ENCODE measurements at regions of chr4 and their contacts with region 1.

Region 1: GRCh38 chr4:15479089-15479912 is 9.6 kb downstream of the CC2D2A start:
- DNase-seq: peak; percentile 15 to 75 (median 37)
- ATAC-seq: peak; percentile 85
- H3K4me3 ChIP-seq: peak overlapping the region; percentile 28
- H3K27ac ChIP-seq: no peak overlapping the region; the same call in 2 of the 3 replicates
- H3K4me1 ChIP-seq: peaks cover 0 to 9% of the 10 kb centered on the region in 2 experiments; a peak in 3 of 5 replicates
- H3K27me3 ChIP-seq: no peaks in the 10 kb centered on the region
- CTCF ChIP-seq: peak; percentile 49 to 87 (median 74); a peak in 5 of 6 replicates
- EP300 ChIP-seq: no peak
- POLR2A ChIP-seq: no peak
- RAD21 ChIP-seq: peak; percentile 89 to 91

Region 2: GRCh38 chr4:15513545-15513944 is 34.2 kb after region 1 on chr4:
- CTCF ChIA-PET with region 1: no interaction called
- POLR2A ChIA-PET with region 1: no interaction called
- in situ Hi-C with region 1: no loop called
- intact Hi-C with region 1: loop called (anchors 2 kb)
- DNase-seq: no peak
- ATAC-seq: peak; percentile 73
- H3K4me3 ChIP-seq: no peak overlapping the region
- H3K27ac ChIP-seq: no peak overlapping the region
- H3K4me1 ChIP-seq: no peaks in the 10 kb centered on the region
- H3K27me3 ChIP-seq: no peaks in the 10 kb centered on the region
- CTCF ChIP-seq: 0 out of 6 replicates have a peak, but pooled peaks of 1 of the 3 experiments have one; percentile 14
- EP300 ChIP-seq: no peak
- POLR2A ChIP-seq: no peak
- RAD21 ChIP-seq: peak in 1 of 2 experiments; percentile 11; a peak in 1 of 4 replicates

Region 3: DNA sequence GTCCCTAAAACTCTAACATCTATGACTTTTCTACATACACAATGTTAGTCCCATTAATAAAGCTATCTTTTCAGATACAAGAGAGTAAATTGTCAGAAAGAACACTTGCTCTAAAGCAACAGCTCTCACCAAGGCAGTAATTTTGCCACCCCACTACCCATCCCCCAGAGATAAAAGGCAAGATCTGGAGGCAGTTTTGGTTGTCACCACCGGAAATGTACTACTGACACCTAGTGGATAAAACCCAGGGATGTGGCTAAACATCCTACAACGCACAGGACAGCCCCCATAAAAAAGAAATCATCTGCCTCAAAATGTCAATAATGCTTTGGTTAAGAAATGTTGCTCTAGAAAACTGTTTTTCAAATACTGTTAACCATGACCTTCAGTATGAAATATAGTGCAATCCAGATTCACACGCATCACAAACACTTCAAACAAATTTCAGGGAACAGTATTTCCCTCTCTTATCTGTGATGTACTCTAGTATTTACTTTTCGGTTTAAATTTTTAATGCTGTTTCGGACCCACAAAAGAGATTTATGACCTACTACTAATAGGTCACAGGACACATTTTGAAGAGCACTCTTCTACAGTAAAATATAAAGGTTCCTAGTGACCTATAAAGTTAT is 170.7 kb after region 1 on chr4:
- CTCF ChIA-PET with region 1: no interaction called
- POLR2A ChIA-PET with region 1: no interaction called
- in situ Hi-C with region 1: no loop called
- intact Hi-C with region 1: loop called (anchors 1 kb)
- DNase-seq: peak; percentile 50 to 87 (median 60)
- ATAC-seq: peak; percentile 74
- H3K4me3 ChIP-seq: no peak overlapping the region
- H3K27ac ChIP-seq: peak overlapping the region; percentile 61
- H3K4me1 ChIP-seq: peaks cover 13 to 15% of the 10 kb centered on the region in 2 experiments; a peak in 4 of 5 replicates
- H3K27me3 ChIP-seq: no peaks in the 10 kb centered on the region
- CTCF ChIP-seq: peak; percentile 72 to 92 (median 82)
- EP300 ChIP-seq: peak; percentile 68
- POLR2A ChIP-seq: no peak
- RAD21 ChIP-seq: peak; percentile 85 to 87

Region 4: GRCh38 chr4:15794905-15795304 is 315.6 kb after region 1 on chr4:
- CTCF ChIA-PET with region 1: no interaction called
- POLR2A ChIA-PET with region 1: no interaction called
- in situ Hi-C with region 1: no loop called
- intact Hi-C with region 1: no loop called
- DNase-seq: no peak
- ATAC-seq: no peak
- H3K4me3 ChIP-seq: no peak overlapping the region
- H3K27ac ChIP-seq: no peak overlapping the region
- H3K4me1 ChIP-seq: no peaks in the 10 kb centered on the region
- H3K27me3 ChIP-seq: peaks cover 4% of the 10 kb centered on the region in 2 experiments; a peak in 2 of 5 replicates
- CTCF ChIP-seq: no peak
- EP300 ChIP-seq: no peak
- POLR2A ChIP-seq: no peak
- RAD21 ChIP-seq: no peak

Region 5: DNA sequence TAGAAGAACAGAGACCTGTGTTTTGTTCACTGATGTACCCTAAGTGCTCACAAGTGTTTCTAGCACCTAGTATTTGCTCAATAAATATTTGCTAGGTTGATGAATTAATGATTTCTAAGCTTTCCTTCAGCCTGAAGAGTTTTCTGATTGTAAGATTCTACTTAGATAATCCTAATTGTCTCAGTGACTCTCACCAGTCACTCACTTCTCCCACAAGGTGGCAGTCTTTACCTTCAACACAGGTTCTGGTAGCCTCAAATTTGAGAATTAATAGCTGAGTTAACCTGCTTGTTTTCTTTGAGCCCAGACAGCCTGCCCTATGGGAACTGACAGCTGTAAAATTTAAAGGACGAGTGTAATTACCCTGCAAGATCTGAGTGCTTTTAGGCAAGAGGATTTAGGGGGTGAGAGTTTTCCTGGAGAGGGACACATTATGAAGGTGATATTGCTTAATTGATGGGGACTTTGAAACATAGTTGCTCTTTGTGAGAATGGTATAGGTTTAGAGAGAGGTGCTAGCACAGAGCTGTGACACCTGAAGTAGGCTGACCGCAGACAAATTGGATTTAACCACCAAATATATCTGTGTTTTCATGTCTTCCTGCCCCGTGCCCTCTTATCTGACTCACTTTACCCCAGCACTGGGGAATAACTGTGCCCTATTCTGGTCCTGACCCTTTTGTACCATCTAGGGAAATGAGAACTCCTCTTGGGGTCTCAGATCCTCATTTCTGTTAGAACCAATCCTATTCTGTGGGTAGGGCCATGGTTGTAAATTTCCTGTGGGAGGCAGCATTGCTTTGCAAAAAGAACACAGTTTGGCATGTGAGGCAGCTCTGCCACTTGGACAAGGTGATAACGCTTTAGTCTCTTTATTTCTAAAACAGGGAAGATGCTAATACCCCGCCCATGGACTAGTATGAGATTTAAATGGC is 326.5 kb after region 1 on chr4:
- CTCF ChIA-PET with region 1: interaction called, 7 read pairs
- POLR2A ChIA-PET with region 1: no interaction called
- in situ Hi-C with region 1: no loop called
- intact Hi-C with region 1: loop called (anchors 1 kb)
- DNase-seq: peak; percentile 42 to 62 (median 50)
- ATAC-seq: peak; percentile 89
- H3K4me3 ChIP-seq: no peak overlapping the region
- H3K27ac ChIP-seq: no peak overlapping the region
- H3K4me1 ChIP-seq: no peaks in the 10 kb centered on the region
- H3K27me3 ChIP-seq: no peaks in the 10 kb centered on the region; a peak in 1 of 5 replicates
- CTCF ChIP-seq: peak; percentile 63 to 85 (median 74); a peak in 5 of 6 replicates
- EP300 ChIP-seq: no peak
- POLR2A ChIP-seq: no peak
- RAD21 ChIP-seq: peak; percentile 79 to 83

Region 6: DNA sequence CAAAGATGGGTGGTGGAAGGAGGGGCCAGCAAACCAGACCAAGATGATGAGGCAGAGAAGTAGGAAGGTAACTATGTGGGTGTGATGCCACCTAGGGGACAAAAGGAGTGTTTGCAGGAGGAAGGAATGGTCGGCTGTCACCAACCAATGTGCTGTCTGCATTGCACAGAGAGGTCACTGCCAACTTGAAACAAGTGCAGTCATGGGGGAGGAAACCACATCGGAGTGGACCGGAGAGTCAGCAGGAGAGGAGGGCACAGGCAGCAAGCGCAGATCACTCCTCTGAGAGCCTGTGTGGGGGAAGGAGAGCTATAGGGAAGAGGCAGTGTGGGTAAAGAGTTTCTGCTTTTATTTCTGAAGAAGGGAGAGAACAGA is 522.2 kb after region 1 on chr4:
- CTCF ChIA-PET with region 1: interaction called, 3 read pairs
- POLR2A ChIA-PET with region 1: no interaction called
- in situ Hi-C with region 1: loop called (anchors 5 kb)
- intact Hi-C with region 1: loop called (anchors 2 kb)
- DNase-seq: peak; percentile 62 to 68 (median 64)
- ATAC-seq: peak; percentile 99
- H3K4me3 ChIP-seq: no peak overlapping the region
- H3K27ac ChIP-seq: no peak overlapping the region
- H3K4me1 ChIP-seq: no peaks in the 10 kb centered on the region
- H3K27me3 ChIP-seq: peaks cover 0 to 14% of the 10 kb centered on the region in 2 experiments; a peak in 4 of 5 replicates
- CTCF ChIP-seq: peak; percentile 67 to 82 (median 81)
- EP300 ChIP-seq: no peak
- POLR2A ChIP-seq: no peak
- RAD21 ChIP-seq: peak; percentile 74 to 79

Region 7: DNA sequence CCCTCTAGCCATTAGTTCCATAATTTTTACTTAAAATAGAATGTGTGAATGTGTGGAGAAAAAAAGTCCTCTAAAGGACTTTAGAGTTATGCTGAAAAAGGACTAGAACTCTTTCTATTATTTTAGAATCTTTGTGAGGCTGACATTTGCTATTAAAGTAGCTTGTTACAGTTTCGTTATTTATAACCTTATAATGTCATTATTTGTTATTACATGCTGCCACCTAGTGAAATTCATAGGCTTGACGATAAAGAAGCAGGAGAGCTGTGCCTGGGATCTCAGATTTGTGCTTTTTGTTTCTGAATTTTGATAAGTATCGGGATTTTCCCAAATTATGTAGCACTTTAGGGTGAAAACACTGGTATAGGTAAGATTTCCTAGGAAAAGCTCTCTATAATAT is 785.5 kb after region 1 on chr4:
- CTCF ChIA-PET with region 1: interaction called, 9 read pairs
- POLR2A ChIA-PET with region 1: no interaction called
- in situ Hi-C with region 1: no loop called
- intact Hi-C with region 1: loop called (anchors 1 kb)
- DNase-seq: peak in 2 of 4 experiments; percentile 30 to 34
- ATAC-seq: peak; percentile 79
- H3K4me3 ChIP-seq: no peak overlapping the region
- H3K27ac ChIP-seq: no peak overlapping the region
- H3K4me1 ChIP-seq: no peaks in the 10 kb centered on the region
- H3K27me3 ChIP-seq: no peaks in the 10 kb centered on the region
- CTCF ChIP-seq: peak; percentile 33 to 69 (median 40); a peak in 3 of 6 replicates
- EP300 ChIP-seq: no peak
- POLR2A ChIP-seq: no peak
- RAD21 ChIP-seq: peak; percentile 77 to 79

Measured in K562 (cell line).